AG04450 (cell line): ENCODE measurements at regions of chr1 and their contacts with region 1.

Region 1: GRCh38 chr1:15578921-15579682 is 5.7 kb downstream of the AGMAT start:
- DNase-seq: no peak
- H3K4me3 ChIP-seq: no peak overlapping the region
- H3K27ac ChIP-seq: no peak overlapping the region
- H3K27me3 ChIP-seq: no peaks in the 10 kb centered on the region
- CTCF ChIP-seq: no peak

Region 2: GRCh38 chr1:15337656-15338402 is 241.3 kb before region 1 on chr1:
- CTCF ChIA-PET with region 1: no interaction called
- POLR2A ChIA-PET with region 1: no interaction called
- DNase-seq: no peak
- H3K4me3 ChIP-seq: no peak overlapping the region
- H3K27ac ChIP-seq: peak overlapping the region; percentile 65
- H3K27me3 ChIP-seq: no peaks in the 10 kb centered on the region
- CTCF ChIP-seq: no peak

Region 3: DNA sequence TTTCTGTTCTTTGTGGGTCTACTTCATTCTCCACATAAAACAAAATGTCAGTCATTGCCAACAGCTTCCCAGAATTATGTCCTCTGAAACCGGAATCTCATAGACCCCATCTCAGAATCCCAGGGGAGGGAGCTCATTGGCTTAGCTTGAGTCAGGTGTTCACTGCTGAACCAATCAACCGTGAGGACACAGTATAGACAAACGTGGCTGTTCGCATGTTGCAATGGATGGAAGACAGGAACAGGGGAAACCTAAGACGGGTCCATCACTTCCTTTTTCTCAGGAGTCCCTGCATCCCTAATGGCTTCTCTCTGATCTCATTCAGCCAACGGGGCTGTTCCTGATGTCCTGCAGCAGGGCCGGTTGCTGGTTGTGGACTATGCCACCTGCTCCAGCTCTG is 113.4 kb before region 1 on chr1:
- CTCF ChIA-PET with region 1: no interaction called
- POLR2A ChIA-PET with region 1: no interaction called
- DNase-seq: no peak
- H3K4me3 ChIP-seq: no peak overlapping the region
- H3K27ac ChIP-seq: no peak overlapping the region
- H3K27me3 ChIP-seq: peaks cover 3% of the 10 kb centered on the region
- CTCF ChIP-seq: no peak

Region 4: DNA sequence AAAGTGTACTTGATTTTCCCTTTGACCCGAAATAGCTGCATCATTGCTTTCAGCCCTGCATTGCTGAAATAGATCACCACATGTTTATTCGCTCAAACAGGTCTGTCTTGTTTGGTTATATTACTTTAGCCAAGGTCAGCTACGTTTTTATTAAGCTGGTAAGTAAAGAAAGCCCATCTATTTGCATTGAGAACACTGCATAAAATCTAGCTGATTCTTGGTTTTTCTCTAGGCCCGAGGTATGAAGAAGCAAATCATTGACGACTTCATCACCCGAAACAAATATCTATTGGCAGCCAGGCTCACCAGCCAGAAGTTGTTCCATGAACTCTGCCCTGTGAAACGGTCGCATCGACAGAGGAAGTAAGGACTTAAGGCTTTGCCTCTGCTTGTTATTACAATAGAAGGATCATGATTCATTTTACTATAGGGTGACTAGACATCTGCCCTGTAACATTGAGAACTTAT is 19.8 kb before region 1 on chr1:
- CTCF ChIA-PET with region 1: no interaction called
- POLR2A ChIA-PET with region 1: interaction called, 10 read pairs
- DNase-seq: no peak
- H3K4me3 ChIP-seq: no peak overlapping the region
- H3K27ac ChIP-seq: no peak overlapping the region
- H3K27me3 ChIP-seq: no peaks in the 10 kb centered on the region
- CTCF ChIP-seq: no peak